ENCODE measurements at regions of chr12 and their contacts with region 1.

Region 1: GRCh38 chr12:127677537-127678131 is 589.3 kb upstream of the TMEM132C start:
- DNase-seq: peak; percentile 66
- H3K4me3 ChIP-seq: 0 out of 4 replicates have a peak overlapping the region, but pooled peaks of 1 of the 2 experiments have one; percentile 23
- H3K27ac ChIP-seq: no peak overlapping the region
- H3K4me1 ChIP-seq: no peaks in the 10 kb centered on the region
- H3K27me3 ChIP-seq: no peaks in the 10 kb centered on the region
- CTCF ChIP-seq: peak; percentile 53
- EP300 ChIP-seq: no peak
- RAD21 ChIP-seq: peak; percentile 65

Region 2: DNA sequence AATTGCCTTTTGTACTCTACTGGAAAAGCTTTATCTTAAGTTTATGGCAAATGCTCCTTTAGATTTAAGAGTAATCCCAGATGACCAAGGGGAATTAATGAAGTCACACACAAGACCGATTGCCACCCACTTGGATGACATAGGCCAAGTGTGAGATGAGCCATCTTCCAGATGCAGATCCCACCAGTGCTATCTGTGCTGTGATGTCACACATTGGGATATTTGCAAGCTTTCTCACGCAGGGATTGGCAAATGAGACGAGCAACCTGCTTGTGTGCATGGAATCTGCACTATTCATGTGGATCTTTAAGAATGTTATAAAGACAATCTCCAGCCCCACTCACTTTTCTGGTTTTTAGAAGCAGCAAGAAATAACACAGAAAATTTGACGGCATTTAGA is 12.7 kb before region 1 on chr12:
- CTCF ChIA-PET with region 1: interaction called, 32 read pairs
- POLR2A ChIA-PET with region 1: no interaction called
- DNase-seq: no peak
- H3K4me3 ChIP-seq: no peak overlapping the region
- H3K27ac ChIP-seq: no peak overlapping the region
- H3K4me1 ChIP-seq: no peaks in the 10 kb centered on the region
- H3K27me3 ChIP-seq: no peaks in the 10 kb centered on the region
- CTCF ChIP-seq: no peak
- EP300 ChIP-seq: no peak
- RAD21 ChIP-seq: no peak

Region 3: DNA sequence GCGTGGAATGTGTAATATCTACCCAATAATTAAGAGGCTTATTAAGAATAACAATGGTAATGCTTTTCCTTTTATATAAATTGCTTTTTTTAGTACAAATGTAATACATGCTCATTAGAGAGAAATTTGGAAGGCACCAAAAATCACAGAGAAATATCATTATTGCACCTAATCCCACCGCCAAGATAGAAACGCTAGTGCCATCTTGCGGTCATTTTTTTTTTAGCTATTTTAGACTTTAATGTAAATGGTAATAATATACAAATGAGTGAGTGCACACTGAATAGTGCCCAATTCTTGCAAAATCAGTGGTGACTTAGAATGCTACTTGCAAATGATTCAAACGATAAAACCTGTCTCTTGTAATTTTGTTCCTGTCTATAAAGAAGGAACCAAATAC is 12.5 kb after region 1 on chr12:
- CTCF ChIA-PET with region 1: interaction called, 12 read pairs
- POLR2A ChIA-PET with region 1: no interaction called
- DNase-seq: no peak
- H3K4me3 ChIP-seq: no peak overlapping the region
- H3K27ac ChIP-seq: no peak overlapping the region
- H3K4me1 ChIP-seq: no peaks in the 10 kb centered on the region; a peak in 1 of 4 replicates
- H3K27me3 ChIP-seq: no peaks in the 10 kb centered on the region
- CTCF ChIP-seq: peak; percentile 33; the same call in 1 of the 2 replicates
- EP300 ChIP-seq: no peak
- RAD21 ChIP-seq: no peak

Region 4: DNA sequence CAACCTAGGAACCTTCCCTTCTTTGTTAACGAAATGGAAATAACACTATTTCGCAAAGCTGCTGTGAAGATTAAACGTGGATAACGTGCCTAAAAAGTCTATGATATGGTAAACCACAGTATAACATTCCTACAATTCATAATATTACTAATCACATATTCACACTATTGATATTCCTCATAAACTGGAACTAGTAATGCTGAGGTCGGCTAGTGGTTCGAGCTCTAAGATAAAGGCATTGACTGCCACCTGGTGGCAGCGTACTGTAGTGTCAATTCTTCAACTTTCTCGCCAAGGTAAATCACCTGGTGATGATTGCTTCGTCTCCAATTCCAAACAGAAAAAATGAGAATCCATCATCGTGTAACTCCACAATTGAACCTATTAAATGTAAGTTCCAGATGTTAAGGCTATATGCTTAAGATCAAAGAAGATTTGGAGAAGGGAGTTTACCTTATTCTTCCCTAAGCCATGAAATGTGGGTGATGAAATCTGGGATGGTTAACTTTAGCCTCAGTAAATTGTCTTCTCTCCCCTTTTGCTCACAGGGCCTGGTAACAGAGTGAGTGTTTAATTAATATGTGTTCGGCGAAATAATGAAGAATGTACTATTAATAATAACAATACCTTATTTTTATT is 391.8 kb after region 1 on chr12:
- CTCF ChIA-PET with region 1: interaction called, 16 read pairs
- POLR2A ChIA-PET with region 1: no interaction called
- DNase-seq: peak; percentile 46
- H3K4me3 ChIP-seq: no peak overlapping the region
- H3K27ac ChIP-seq: no peak overlapping the region
- H3K4me1 ChIP-seq: no peaks in the 10 kb centered on the region
- H3K27me3 ChIP-seq: no peaks in the 10 kb centered on the region
- CTCF ChIP-seq: peak; percentile 68
- EP300 ChIP-seq: no peak
- RAD21 ChIP-seq: peak; percentile 74

Region 5: DNA sequence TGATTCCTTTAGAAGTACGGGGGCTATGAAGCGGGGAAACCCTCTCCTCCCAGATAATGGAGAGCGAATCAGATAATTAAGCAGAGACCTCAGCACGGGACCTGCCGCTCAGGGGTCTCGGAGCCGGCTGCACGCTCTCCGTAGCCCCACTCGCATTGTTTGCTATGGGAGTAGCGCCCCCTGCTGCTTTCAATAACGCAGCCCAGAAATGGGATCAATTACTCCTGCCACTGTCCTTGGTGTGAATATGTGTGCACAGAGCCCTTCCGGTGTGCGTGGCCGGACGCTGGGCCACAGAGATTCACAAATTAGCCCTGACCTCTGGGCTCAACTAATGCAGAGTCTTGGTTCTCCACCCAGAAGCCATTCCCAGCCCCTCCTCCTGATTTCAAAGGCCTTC is 513.0 kb after region 1 on chr12:
- CTCF ChIA-PET with region 1: interaction called, 16 read pairs
- POLR2A ChIA-PET with region 1: no interaction called
- DNase-seq: peak; percentile 69
- H3K4me3 ChIP-seq: no peak overlapping the region; a peak in 1 of 4 replicates
- H3K27ac ChIP-seq: no peak overlapping the region
- H3K4me1 ChIP-seq: no peaks in the 10 kb centered on the region; a peak in 1 of 4 replicates
- H3K27me3 ChIP-seq: no peaks in the 10 kb centered on the region
- CTCF ChIP-seq: no peak
- EP300 ChIP-seq: no peak
- RAD21 ChIP-seq: peak; percentile 63